K562 (cell line): ENCODE measurements at regions of chr15 and their contacts with region 1.

Region 1: DNA sequence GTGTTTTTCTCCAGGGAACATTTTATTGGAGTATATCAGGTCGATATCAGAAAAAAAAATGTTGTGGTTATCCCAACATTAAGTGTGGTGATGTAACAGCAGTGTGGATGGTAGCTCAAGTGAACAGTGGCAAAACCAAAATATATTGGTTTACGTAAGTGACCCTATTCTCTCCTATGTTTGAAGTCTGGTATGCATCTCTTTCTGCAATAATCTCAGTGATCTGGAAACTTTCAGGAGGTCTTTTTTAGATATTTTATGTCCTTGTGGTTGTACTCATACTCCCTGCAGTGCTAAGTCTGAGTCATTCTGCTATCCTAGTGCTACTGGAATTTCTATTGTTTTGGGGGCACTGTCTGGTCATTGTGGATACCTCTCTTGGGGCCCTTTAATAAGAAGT is 137.9 kb downstream of the SNRPN start:
- DNase-seq: no peak
- ATAC-seq: no peak
- H3K4me3 ChIP-seq: no peak overlapping the region
- H3K27ac ChIP-seq: no peak overlapping the region
- H3K4me1 ChIP-seq: no peaks in the 10 kb centered on the region
- H3K27me3 ChIP-seq: no peaks in the 10 kb centered on the region
- CTCF ChIP-seq: no peak
- EP300 ChIP-seq: no peak
- POLR2A ChIP-seq: no peak
- RAD21 ChIP-seq: no peak

Region 2: GRCh38 chr15:24856397-24857390 is 236.0 kb before region 1 on chr15:
- CTCF ChIA-PET with region 1: no interaction called
- POLR2A ChIA-PET with region 1: no interaction called
- in situ Hi-C with region 1: no loop called
- intact Hi-C with region 1: no loop called
- DNase-seq: peak in 3 of 4 experiments; percentile 10 to 12 (median 11)
- ATAC-seq: no peak
- H3K4me3 ChIP-seq: no peak overlapping the region
- H3K27ac ChIP-seq: no peak overlapping the region
- H3K4me1 ChIP-seq: no peaks in the 10 kb centered on the region
- H3K27me3 ChIP-seq: no peaks in the 10 kb centered on the region
- CTCF ChIP-seq: no peak
- EP300 ChIP-seq: no peak
- POLR2A ChIP-seq: no peak
- RAD21 ChIP-seq: no peak

Region 3: DNA sequence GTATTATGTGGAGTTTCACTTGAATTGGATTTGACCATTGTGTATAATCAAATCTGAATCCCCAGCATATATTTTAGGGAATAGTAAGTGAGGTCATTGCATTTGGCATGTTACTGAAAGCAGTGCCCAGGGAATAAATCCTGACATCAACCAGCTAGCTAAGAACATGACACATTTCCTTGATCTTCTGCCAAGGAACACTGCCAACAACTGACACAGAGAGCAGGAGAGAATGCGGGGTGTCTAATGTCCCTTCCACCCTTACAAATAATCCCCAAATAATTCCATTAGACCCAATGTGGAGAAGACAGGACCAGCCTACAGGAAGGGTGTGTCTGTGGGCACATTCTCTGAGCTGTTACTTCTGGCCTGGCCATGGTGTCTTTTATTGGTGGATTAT is 376.7 kb after region 1 on chr15:
- CTCF ChIA-PET with region 1: no interaction called
- POLR2A ChIA-PET with region 1: no interaction called
- in situ Hi-C with region 1: loop called (anchors 25 kb)
- intact Hi-C with region 1: no loop called
- DNase-seq: no peak
- ATAC-seq: no peak
- H3K4me3 ChIP-seq: no peak overlapping the region
- H3K27ac ChIP-seq: no peak overlapping the region
- H3K4me1 ChIP-seq: no peaks in the 10 kb centered on the region
- H3K27me3 ChIP-seq: peaks cover 0 to 11% of the 10 kb centered on the region in 2 experiments; a peak in 1 of 5 replicates
- CTCF ChIP-seq: no peak
- EP300 ChIP-seq: no peak
- POLR2A ChIP-seq: no peak
- RAD21 ChIP-seq: no peak